Left ventricle myocardium superior (tissue), 1 donor: ENCODE measurements at regions of chr6 and their contacts with region 1.

Region 1: GRCh38 chr6:3825851-3826581 is 23.2 kb upstream of the FAM50B start:
- DNase-seq: peak; percentile 89
- ATAC-seq: peak; percentile 94

Region 2: GRCh38 chr6:3751730-3752542 is 74.1 kb before region 1 on chr6:
- intact Hi-C with region 1: loop called (anchors 10 kb)
- DNase-seq: peak; percentile 93
- ATAC-seq: peak; percentile 78

Region 3: GRCh38 chr6:3882866-3883265 is 56.9 kb after region 1 on chr6:
- intact Hi-C with region 1: no loop called
- DNase-seq: no peak
- ATAC-seq: peak; percentile 83